Endothelial cell of umbilical vein (primary cell): ENCODE measurements at regions of chr7 and their contacts with region 1.

Region 1: GRCh38 chr7:152894273-152895170 is 135.0 kb downstream of the ACTR3B start:
- DNase-seq: no peak
- H3K4me3 ChIP-seq: no peak overlapping the region
- H3K27ac ChIP-seq: no peak overlapping the region
- H3K4me1 ChIP-seq: no peaks in the 10 kb centered on the region
- H3K27me3 ChIP-seq: no peaks in the 10 kb centered on the region
- CTCF ChIP-seq: peak; percentile 68 to 71
- POLR2A ChIP-seq: no peak

Region 2: GRCh38 chr7:152910545-152911225 is 16.2 kb after region 1 on chr7:
- CTCF ChIA-PET with region 1: no interaction called
- POLR2A ChIA-PET with region 1: no interaction called
- dilution Hi-C with region 1: no loop called
- intact Hi-C with region 1: no loop called
- DNase-seq: no peak
- H3K4me3 ChIP-seq: no peak overlapping the region
- H3K27ac ChIP-seq: no peak overlapping the region
- H3K4me1 ChIP-seq: no peaks in the 10 kb centered on the region
- H3K27me3 ChIP-seq: no peaks in the 10 kb centered on the region
- CTCF ChIP-seq: no peak
- POLR2A ChIP-seq: no peak

Region 3: GRCh38 chr7:154503962-154504550 is 1609.5 kb after region 1 on chr7:
- CTCF ChIA-PET with region 1: interaction called, 13 read pairs
- POLR2A ChIA-PET with region 1: no interaction called
- dilution Hi-C with region 1: no loop called
- intact Hi-C with region 1: no loop called
- DNase-seq: peak; percentile 27
- H3K4me3 ChIP-seq: no peak overlapping the region
- H3K27ac ChIP-seq: no peak overlapping the region
- H3K4me1 ChIP-seq: no peaks in the 10 kb centered on the region
- H3K27me3 ChIP-seq: no peaks in the 10 kb centered on the region
- CTCF ChIP-seq: peak in 1 of 2 donors; percentile 27
- POLR2A ChIP-seq: no peak